GM10248 (cell line): ENCODE measurements at regions of chr1 and their contacts with region 1.

Region 1: GRCh38 chr1:18883636-18884418 is 18.5 kb downstream of the ALDH4A1 start:
- DNase-seq: peak; percentile 77
- CTCF ChIP-seq: peak; percentile 90

Region 2: DNA sequence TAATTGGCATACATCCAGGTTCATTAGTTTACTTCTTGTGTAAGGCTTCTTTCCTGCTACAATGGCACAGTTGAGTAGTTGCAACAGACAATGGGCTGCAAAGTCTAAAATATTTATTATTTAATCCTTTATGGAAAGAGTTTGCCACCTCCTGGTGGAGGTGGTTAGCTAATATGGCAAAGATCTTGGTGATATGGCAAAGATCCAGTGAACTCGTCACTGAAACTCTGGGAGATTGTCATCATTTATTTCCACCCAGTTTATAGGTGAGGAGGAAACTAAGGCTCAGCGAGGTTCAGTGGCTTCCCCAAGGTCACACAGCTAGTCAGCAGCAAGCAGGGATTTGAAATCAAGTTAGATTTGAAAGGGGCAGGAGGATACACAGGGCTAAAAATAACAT is 88.7 kb after region 1 on chr1:
- CTCF ChIA-PET with region 1: interaction called, 13 read pairs
- POLR2A ChIA-PET with region 1: no interaction called
- DNase-seq: no peak
- CTCF ChIP-seq: peak; percentile 15

Region 3: GRCh38 chr1:19074902-19075721 is 191.3 kb after region 1 on chr1:
- CTCF ChIA-PET with region 1: interaction called, 11 read pairs
- POLR2A ChIA-PET with region 1: no interaction called
- DNase-seq: no peak
- CTCF ChIP-seq: no peak